ENCODE measurements at regions of chr21 and their contacts with region 1.

Region 1: DNA sequence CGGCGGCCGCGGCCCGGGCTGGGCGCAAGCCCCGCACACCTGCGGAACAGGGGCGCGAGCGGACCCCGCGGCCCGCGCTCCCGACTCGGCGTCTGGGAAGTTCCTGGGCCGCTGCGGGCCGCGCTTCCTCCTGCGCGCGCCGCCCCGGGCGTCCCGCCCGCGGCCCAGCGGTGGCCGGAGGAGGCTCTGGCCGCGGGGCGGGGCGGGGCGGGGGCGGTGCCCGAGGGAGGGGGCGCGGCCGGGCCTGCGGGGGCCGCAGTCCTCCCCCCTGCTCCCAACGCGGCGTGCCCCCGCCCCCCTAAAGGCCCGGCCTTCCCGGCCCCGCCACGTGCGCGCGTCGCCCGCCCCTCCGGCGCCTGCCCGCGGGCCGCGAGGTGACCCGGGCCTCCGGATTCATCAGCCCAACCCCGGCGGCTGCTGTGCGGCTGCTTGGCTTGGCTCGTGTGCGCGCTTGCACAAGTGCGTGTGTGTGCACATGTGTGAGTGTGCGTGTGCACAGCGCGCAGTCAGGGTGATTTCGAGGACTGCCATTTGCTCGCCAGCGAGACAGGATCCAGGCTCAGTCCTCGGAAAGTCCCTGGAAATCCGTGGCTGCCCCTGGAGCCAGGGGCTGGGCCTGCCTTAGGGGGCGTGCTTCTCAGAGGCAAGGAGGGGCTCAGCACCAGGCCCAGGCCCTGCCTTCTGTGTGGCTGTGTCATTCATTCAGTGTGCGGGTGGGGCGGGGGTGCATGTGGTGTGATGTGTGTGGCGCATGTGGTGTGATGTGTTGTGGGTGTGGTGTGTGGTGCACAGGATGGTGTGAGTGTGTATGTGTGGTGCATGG is at the start of gene C2CD2:
- DNase-seq: peak; percentile 79
- ATAC-seq: peak; percentile 44
- H3K4me3 ChIP-seq: peak within 1 kb of the TSS; percentile 76
- H3K27ac ChIP-seq: peak within 1 kb of the TSS; percentile 98
- H3K4me1 ChIP-seq: peaks cover 63% of the 10 kb centered on the region
- H3K27me3 ChIP-seq: no peaks in the 10 kb centered on the region
- CTCF ChIP-seq: 0 out of 2 replicates have a peak, but pooled peaks have one; percentile 8
- total RNA-seq, gene C2CD2: 50.4 and 81.4 TPM in 2 replicates

Region 2: GRCh38 chr21:41966041-41966684 is 12.1 kb after region 1 on chr21:
- CTCF ChIA-PET with region 1: no interaction called
- POLR2A ChIA-PET with region 1: interaction called, 5 read pairs
- intact Hi-C with region 1: loop called (anchors 1 kb)
- DNase-seq: peak; percentile 96
- ATAC-seq: peak; percentile 68
- H3K4me3 ChIP-seq: no peak overlapping the region
- H3K27ac ChIP-seq: peak overlapping the region; percentile 95
- H3K4me1 ChIP-seq: peaks cover 46% of the 10 kb centered on the region
- H3K27me3 ChIP-seq: no peaks in the 10 kb centered on the region
- CTCF ChIP-seq: peak; percentile 53

Region 3: DNA sequence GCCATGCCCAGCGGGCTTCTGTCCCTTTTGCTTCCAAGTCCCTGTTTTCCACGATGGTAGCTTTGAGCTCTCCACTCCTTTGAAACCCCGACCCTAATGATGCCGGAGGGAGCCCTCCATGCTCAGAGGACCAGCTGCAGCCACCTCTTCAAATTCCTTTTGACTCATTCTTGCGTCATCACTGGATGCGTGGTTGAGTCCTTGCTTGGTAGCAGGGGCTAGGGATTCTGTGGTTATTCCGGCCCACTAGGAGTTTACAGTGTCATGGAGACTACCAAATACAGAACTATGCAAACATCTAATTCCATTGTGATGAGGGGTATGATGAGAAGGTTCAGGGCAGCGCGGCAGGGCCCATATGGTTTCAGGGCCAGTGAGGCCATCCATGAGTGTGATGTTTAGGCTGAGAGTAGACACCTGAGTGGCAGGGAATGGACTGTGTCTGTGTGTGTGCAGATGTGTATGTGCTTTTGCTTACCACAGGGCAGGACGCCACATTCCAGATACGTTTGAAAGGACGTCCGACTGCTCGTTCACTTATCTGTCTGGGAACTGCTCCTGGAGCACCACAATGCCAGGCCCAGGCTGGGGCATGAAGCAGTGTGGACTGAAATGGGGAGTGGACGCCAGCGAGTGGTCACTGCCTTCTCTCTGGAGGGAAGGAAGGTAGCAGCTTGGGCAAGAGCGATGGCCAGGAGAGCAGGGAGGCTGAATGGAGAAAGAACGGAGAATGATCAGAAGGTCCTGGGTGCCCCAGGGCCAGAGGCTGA is 86.6 kb after region 1 on chr21:
- CTCF ChIA-PET with region 1: no interaction called
- POLR2A ChIA-PET with region 1: no interaction called
- intact Hi-C with region 1: no loop called
- DNase-seq: peak; percentile 99
- ATAC-seq: peak; percentile 97
- H3K4me3 ChIP-seq: no peak overlapping the region
- H3K27ac ChIP-seq: peak overlapping the region; percentile 85
- H3K4me1 ChIP-seq: peaks cover 31% of the 10 kb centered on the region
- H3K27me3 ChIP-seq: no peaks in the 10 kb centered on the region
- CTCF ChIP-seq: no peak

Measured in PC-3 (cell line).